Transverse colon (tissue), 4 donors: ENCODE measurements at regions of chr2 and their contacts with region 1.

Region 1: DNA sequence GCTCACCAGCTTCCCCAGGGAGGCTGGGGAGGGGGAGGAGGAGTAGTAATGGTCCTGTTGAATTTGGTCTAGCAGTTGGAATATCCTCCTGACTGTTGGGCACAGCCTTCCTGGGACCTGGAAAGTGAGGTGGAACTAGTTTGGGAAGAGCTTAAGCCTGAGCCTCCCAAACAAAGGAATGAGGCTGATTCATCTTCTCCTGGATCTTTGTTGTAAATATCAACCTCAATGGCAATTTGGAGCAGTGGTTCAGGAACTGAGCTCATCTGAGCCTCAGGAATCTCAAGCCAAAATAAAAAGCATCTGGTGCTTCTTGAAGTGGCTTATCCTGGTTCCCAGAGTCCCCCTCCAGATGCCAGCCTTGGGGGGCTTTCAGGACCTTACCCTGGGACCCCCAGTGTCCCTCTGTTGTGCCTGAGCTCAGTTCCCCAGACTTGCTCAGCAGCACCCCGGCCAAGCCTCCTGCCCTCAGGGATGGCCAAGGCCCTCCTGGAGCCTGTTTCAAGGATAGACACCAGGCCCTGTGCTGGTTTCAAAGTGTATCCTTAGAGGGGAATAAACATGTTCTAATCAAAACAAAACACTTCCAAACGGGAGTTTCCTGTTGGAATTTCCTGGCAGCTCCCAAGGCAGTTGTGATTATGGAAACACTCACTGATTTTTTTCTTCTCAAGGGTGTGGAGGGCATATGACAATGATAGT is 112.6 kb downstream of the DDX1 start:
- DNase-seq: no peak
- H3K4me3 ChIP-seq: no peak overlapping the region
- H3K27ac ChIP-seq: no peak overlapping the region
- H3K4me1 ChIP-seq: peaks cover 0 to 13% (median 7%) of the 10 kb centered on the region in 4 donors
- H3K27me3 ChIP-seq: no peaks in the 10 kb centered on the region
- CTCF ChIP-seq: no peak
- EP300 ChIP-seq: no peak
- POLR2A ChIP-seq: no peak

Region 2: GRCh38 chr2:14039134-14039533 is 1665.1 kb before region 1 on chr2:
- in situ Hi-C with region 1: no loop called
- intact Hi-C with region 1: loop called (anchors 10 kb)
- DNase-seq: no peak
- H3K4me3 ChIP-seq: no peak overlapping the region
- H3K27ac ChIP-seq: no peak overlapping the region
- H3K4me1 ChIP-seq: no peaks in the 10 kb centered on the region
- H3K27me3 ChIP-seq: no peaks in the 10 kb centered on the region
- CTCF ChIP-seq: no peak
- EP300 ChIP-seq: no peak
- POLR2A ChIP-seq: no peak

Region 3: DNA sequence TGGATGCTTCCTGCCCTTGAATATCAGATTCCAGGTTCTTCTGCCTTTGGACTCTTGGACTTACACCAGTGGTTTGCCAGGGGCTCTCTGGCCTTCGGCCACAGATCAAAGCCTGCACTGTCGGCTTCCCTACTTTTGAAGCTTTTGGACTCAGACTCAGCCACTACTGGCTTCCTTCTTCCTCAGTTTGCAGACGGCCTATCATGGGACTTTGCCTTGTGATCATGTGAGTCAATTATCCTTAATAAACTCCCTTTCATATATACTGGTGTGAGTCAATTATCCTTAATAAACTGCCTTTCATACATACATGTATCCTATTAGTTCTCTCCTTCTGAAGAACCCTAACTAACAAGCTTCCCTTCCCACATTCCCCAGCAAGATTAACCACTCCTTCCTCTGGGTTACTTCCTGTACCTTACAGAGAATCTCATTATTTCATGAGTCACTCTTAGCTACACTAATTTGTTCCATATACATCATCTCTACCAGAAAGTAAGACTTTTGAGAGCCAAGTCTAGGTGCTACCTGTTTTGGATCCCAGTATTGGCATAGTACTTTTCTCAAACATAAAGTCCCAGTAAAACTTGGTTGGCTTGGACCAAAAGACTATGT is 1103.0 kb before region 1 on chr2:
- in situ Hi-C with region 1: no loop called
- intact Hi-C with region 1: loop called (anchors 5 kb)
- DNase-seq: no peak
- H3K4me3 ChIP-seq: no peak overlapping the region
- H3K27ac ChIP-seq: no peak overlapping the region
- H3K4me1 ChIP-seq: no peaks in the 10 kb centered on the region
- H3K27me3 ChIP-seq: no peaks in the 10 kb centered on the region
- CTCF ChIP-seq: no peak
- EP300 ChIP-seq: no peak
- POLR2A ChIP-seq: no peak

Region 4: DNA sequence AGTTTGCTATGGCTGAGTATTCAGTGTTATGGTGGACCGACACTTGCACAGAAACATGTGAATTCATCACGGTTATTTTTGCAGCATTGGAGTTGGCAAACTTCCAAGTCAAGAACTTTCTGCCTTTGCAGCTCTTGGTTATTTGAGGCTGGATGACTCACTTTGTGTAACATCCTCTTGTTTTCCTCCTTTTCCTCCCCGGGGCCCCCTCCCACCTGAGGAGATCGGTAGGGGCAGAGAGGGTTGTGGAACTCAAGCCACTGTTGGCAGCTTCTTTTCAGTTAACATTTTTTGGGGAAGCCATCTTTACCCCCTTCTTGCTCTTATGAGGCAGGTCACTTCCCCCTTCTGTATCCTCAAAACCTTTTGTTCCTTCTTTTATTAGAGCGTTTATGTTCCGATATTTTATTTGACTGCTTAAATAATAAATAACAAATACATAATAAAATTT is 64.0 kb before region 1 on chr2:
- in situ Hi-C with region 1: no loop called
- intact Hi-C with region 1: no loop called
- DNase-seq: no peak
- H3K4me3 ChIP-seq: no peak overlapping the region
- H3K27ac ChIP-seq: no peak overlapping the region
- H3K4me1 ChIP-seq: peaks cover 0 to 8% (median 0%) of the 10 kb centered on the region in 4 donors
- H3K27me3 ChIP-seq: no peaks in the 10 kb centered on the region
- CTCF ChIP-seq: no peak
- EP300 ChIP-seq: no peak
- POLR2A ChIP-seq: no peak

Region 5: GRCh38 chr2:15993232-15993610 is 289.0 kb after region 1 on chr2:
- in situ Hi-C with region 1: no loop called
- intact Hi-C with region 1: no loop called
- DNase-seq: no peak
- H3K4me3 ChIP-seq: no peak overlapping the region
- H3K27ac ChIP-seq: no peak overlapping the region
- H3K4me1 ChIP-seq: no peaks in the 10 kb centered on the region
- H3K27me3 ChIP-seq: no peaks in the 10 kb centered on the region
- CTCF ChIP-seq: no peak
- EP300 ChIP-seq: no peak
- POLR2A ChIP-seq: no peak

Region 6: DNA sequence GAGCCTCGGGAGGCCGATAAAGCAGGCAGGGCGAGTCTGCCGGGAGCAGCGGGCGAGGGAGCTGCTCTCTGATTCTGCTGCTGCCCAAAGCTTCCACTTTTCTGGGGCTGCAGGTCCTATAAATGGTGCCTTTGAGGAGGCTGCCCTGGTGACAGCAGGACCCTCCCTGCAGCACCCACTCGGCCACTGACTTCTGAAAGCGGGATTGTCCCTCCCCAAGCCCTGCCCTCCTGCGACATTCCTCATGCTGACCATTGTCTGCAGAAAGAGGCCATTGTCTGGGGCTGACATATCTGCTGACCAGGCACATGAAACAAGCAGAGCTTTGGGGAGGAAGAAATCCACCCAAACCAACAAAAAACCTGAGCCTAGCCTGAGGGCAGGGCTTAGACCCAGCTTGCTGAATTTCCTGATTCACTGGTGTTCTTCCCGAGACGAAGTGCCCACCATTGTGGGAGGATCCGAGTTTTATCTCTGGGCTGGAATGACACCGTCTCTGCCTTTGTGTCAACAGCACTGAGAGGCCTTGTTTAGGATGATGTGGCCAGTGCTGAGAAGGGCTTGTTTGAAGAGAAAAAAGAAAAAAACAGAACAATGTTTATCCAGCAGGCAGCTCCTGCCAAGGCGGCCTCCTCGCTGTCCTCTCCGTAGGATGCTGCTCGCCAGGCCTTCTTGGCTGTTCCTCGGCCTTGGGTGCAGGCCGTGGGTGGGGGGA is 365.9 kb after region 1 on chr2:
- in situ Hi-C with region 1: no loop called
- intact Hi-C with region 1: no loop called
- DNase-seq: no peak
- H3K4me3 ChIP-seq: no peak overlapping the region
- H3K27ac ChIP-seq: no peak overlapping the region
- H3K4me1 ChIP-seq: no peaks in the 10 kb centered on the region
- H3K27me3 ChIP-seq: no peaks in the 10 kb centered on the region
- CTCF ChIP-seq: no peak
- EP300 ChIP-seq: no peak
- POLR2A ChIP-seq: no peak

Region 7: DNA sequence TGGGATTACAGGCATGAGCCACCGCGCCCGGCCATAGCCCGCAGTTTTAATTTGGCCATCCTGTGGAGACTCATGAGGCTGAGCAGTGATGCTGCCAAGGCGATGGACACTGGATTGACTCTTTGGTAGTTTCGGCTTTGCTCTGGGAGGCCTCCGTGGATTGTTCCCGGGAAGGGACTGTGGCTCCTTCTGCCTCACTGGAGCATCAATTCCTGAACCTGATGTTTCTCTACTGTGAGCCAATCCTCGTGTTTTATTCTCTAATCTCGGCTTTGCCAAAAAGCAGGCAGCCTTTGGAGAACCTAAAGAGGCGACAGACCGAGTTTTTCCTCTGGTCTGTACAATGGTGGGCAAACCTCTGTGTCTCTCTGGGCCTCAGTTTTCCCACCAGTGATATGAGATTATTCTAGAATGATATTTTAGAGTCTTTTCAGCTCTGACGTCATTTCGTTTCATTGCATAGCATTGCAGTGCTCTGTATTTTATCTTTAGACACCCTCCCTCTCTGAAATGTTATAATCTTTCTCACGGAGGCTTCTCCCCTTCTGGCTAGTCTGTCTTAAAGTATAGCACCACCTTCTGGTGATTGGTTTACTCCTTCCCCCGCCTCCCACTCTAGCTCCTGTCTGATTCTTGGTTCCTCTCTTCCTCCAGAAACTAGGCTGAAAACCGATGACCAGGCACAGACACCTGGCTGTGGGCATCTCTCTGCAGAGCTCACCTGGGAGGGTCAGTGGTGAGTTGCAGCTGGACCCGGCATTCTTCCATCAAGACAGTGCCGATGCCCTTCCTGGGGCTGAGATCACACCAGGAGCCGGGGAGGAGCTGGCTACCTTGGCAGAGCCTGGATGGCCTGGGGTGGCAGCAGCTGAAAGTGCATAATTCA is 577.5 kb after region 1 on chr2:
- in situ Hi-C with region 1: no loop called
- intact Hi-C with region 1: no loop called
- DNase-seq: no peak
- H3K4me3 ChIP-seq: no peak overlapping the region
- H3K27ac ChIP-seq: no peak overlapping the region
- H3K4me1 ChIP-seq: no peaks in the 10 kb centered on the region
- H3K27me3 ChIP-seq: no peaks in the 10 kb centered on the region
- CTCF ChIP-seq: peak; percentile 32 to 50 (median 45)
- EP300 ChIP-seq: no peak
- POLR2A ChIP-seq: no peak